ENCODE measurements at regions of chr12 and their contacts with region 1.

Region 1: GRCh38 chr12:575948-576612 is 87.2 kb downstream of the NINJ2 start:
- DNase-seq: peak in 1 of 2 experiments; percentile 96
- H3K4me3 ChIP-seq: no peak overlapping the region; a peak in 1 of 8 replicates
- H3K27ac ChIP-seq: no peak overlapping the region
- H3K4me1 ChIP-seq: peaks cover 0 to 10% (median 3%) of the 10 kb centered on the region in 4 experiments; a peak in 6 of 7 replicates
- H3K27me3 ChIP-seq: peaks cover 0 to 9% (median 7%) of the 10 kb centered on the region in 4 experiments; a peak in 6 of 7 replicates
- CTCF ChIP-seq: peak; percentile 93 to 97 (median 94)
- EP300 ChIP-seq: no peak
- POLR2A ChIP-seq: peak in 1 of 2 experiments; percentile 43; a peak in 1 of 3 replicates
- RAD21 ChIP-seq: peak; percentile 82 to 89

Region 2: DNA sequence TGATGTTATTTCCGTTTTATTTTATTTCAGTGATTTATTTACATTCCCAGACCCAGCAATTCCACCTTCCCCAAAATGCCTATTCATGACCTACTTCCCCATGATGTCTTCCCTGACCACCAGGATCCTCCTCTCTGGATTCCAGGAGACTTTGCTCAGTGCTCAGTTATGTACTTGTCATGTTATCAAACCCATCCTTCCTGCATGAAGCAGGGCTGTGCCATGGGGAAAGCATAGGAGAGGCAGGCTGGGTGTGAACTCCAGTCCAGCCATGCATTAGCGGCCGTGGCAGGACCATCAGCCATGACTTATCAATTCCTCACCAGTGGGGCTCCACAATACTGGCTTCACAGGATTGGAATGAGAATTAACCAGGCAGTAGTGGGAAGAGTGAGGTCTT is 58.5 kb before region 1 on chr12:
- CTCF ChIA-PET with region 1: no interaction called
- POLR2A ChIA-PET with region 1: no interaction called
- DNase-seq: no peak
- H3K4me3 ChIP-seq: no peak overlapping the region
- H3K27ac ChIP-seq: no peak overlapping the region
- H3K4me1 ChIP-seq: peaks cover 0 to 3% (median 0%) of the 10 kb centered on the region in 4 experiments; a peak in 1 of 7 replicates
- H3K27me3 ChIP-seq: no peaks in the 10 kb centered on the region
- CTCF ChIP-seq: no peak
- EP300 ChIP-seq: no peak
- POLR2A ChIP-seq: no peak
- RAD21 ChIP-seq: no peak

Region 3: GRCh38 chr12:563250-563781 is 12.8 kb before region 1 on chr12:
- CTCF ChIA-PET with region 1: interaction called, 23 read pairs
- POLR2A ChIA-PET with region 1: no interaction called
- DNase-seq: no peak
- H3K4me3 ChIP-seq: no peak overlapping the region
- H3K27ac ChIP-seq: no peak overlapping the region
- H3K4me1 ChIP-seq: no peaks in the 10 kb centered on the region
- H3K27me3 ChIP-seq: no peaks in the 10 kb centered on the region
- CTCF ChIP-seq: no peak
- EP300 ChIP-seq: no peak
- POLR2A ChIP-seq: no peak
- RAD21 ChIP-seq: no peak

Region 4: GRCh38 chr12:597926-598568 is 22.0 kb after region 1 on chr12:
- CTCF ChIA-PET with region 1: interaction called, 15 read pairs
- POLR2A ChIA-PET with region 1: no interaction called
- DNase-seq: no peak
- H3K4me3 ChIP-seq: no peak overlapping the region
- H3K27ac ChIP-seq: 0 out of 2 replicates have a peak overlapping the region, but pooled peaks have one; percentile 22
- H3K4me1 ChIP-seq: peaks cover 0 to 5% (median 1%) of the 10 kb centered on the region in 4 experiments; a peak in 3 of 7 replicates
- H3K27me3 ChIP-seq: no peaks in the 10 kb centered on the region
- CTCF ChIP-seq: no peak
- EP300 ChIP-seq: no peak
- POLR2A ChIP-seq: no peak
- RAD21 ChIP-seq: no peak

Region 5: DNA sequence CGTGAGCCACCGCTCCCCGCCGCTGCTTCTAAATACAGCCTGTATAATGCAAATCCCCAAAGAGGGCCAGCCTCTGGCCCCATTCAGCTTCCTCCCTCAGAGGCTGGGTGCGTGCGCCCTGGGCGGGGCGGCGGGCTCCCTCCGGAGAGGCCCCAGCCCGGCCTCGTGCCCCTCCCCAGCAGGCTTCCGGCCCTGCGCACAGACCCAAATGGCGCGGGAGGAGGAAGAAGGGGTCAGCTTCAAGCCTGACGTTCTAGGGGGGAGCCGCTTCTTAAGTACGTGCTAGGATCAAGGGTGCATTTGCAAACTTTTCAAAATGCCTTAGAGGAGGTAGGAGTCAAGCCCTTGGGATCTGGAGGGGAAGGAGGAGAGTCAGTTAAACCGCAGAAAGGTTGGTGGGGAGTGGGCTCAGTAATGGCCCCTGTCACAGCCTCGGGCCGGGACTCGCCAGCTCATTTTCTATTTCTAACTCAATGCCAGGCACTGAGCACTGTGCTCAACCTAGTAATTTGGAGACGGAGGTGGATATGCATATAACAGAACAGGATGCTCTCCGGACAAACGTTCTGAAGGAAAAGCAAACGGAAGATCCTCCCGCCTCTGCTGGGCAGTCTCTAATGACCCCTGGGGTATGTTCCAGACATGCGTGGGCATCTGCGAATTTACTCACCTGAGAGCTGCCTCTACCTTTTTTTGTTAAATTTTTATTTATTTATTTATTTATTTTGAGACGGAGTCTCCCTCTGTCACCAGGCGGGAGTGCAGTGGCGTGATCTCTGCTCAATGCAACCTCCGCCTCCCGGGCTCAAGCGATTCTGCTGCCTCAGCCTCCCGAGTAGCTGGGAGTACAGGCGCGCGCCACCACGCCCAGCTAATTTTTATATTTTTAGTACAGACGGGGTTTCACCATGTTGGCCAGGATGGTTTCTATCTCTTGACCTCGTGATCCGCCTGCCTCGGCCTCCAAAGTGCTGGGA is 54.9 kb after region 1 on chr12:
- CTCF ChIA-PET with region 1: interaction called, 13 read pairs
- POLR2A ChIA-PET with region 1: interaction called, 3 read pairs
- DNase-seq: peak in 1 of 2 experiments; percentile 69
- H3K4me3 ChIP-seq: peak overlapping the region in 2 of 4 experiments; percentile 26 to 41; a peak in 5 of 8 replicates
- H3K27ac ChIP-seq: no peak overlapping the region
- H3K4me1 ChIP-seq: peaks cover 6 to 14% (median 13%) of the 10 kb centered on the region in 4 experiments
- H3K27me3 ChIP-seq: no peaks in the 10 kb centered on the region
- CTCF ChIP-seq: no peak
- EP300 ChIP-seq: no peak
- POLR2A ChIP-seq: no peak
- RAD21 ChIP-seq: no peak

Region 6: GRCh38 chr12:818733-819132 is 242.7 kb after region 1 on chr12:
- CTCF ChIA-PET with region 1: interaction called, 41 read pairs
- POLR2A ChIA-PET with region 1: no interaction called
- DNase-seq: no peak
- H3K4me3 ChIP-seq: no peak overlapping the region; a peak in 1 of 8 replicates
- H3K27ac ChIP-seq: no peak overlapping the region
- H3K4me1 ChIP-seq: peaks cover 1 to 6% (median 4%) of the 10 kb centered on the region in 4 experiments; a peak in 5 of 7 replicates
- H3K27me3 ChIP-seq: no peaks in the 10 kb centered on the region
- CTCF ChIP-seq: no peak
- EP300 ChIP-seq: no peak
- POLR2A ChIP-seq: no peak
- RAD21 ChIP-seq: no peak